A549 (cell line): ENCODE measurements at regions of chr19 and their contacts with region 1.

Region 1: DNA sequence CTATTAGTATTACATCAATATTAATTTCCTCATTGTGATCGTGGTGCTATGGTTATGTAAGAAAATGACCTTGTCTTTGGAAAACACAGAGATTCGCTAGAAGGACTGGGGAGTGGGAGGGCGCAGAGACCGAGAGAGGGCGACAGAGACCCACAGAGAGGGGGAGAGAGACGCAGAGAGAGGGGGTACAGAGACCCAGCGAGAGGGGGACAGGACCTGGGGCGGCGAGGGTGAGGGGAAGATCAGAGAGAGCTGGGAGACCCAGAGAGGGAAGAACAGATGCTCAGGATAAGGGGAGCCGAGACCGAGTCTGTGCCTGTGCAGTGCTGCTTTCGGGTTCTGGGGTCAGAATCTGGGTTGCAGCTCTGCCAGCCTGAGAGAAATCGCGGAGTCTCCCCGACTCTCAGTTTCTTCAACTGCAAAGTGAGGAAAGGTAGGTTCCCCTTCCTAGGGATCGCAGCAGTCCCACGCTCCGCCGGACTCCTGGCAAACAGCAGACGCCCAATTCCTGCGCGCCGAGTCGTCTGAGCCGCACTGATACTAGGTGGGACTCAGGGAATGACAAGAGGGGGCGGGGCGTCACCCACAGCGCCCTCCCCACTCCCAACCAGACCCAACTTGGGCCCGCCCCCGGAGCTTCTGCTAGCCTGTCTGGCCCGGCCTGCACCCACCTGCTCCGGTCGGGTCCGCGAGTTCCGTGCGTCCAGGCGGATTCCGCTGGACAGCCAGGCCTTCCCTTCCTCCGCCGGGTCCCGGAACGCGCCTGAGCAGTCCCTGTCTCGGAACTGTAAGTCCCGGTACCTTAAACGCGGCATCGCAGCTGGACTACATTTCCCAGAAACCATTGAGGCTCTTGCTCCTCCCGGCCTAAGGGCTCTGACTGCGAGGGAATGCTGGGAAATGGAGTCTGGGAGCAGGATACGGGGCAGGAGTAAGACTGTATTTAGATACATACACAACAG is 15.3 kb downstream of the IZUMO2 start:
- DNase-seq: peak; percentile 90 to 96
- ATAC-seq: peak; percentile 92 to 95
- H3K4me3 ChIP-seq: peak overlapping the region; percentile 53
- H3K27ac ChIP-seq: peak overlapping the region in 1 of 2 experiments; percentile 70; a peak in 3 of 6 replicates
- H3K4me1 ChIP-seq: peaks cover 3% of the 10 kb centered on the region; the same call in 1 of the 3 replicates
- CTCF ChIP-seq: peak; percentile 89
- EP300 ChIP-seq: no peak
- POLR2A ChIP-seq: no peak
- RAD21 ChIP-seq: peak; percentile 88 to 93

Region 2: DNA sequence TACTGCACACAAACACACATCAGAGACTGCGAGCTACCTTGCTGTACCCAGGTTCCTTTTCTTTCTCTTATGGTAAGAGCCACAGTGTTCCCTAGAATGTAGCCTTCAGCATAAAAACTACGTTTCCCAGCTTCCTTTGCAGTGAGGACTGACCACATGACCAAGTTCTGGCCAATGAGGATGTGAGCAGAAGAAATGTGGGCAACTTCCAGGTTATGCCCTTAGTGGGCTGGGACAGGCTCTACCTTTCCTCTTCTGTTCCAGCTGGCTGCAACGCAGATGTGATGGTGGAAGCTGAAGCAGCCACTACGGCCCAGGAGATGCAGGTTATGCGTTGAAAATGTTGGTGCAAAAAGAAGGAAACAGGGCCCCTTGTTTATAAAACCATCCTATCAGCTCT is 150.0 kb before region 1 on chr19:
- CTCF ChIA-PET with region 1: no interaction called
- POLR2A ChIA-PET with region 1: no interaction called
- DNase-seq: peak; percentile 76 to 83
- ATAC-seq: peak; percentile 72 to 95
- H3K4me3 ChIP-seq: no peak overlapping the region
- H3K27ac ChIP-seq: no peak overlapping the region
- H3K4me1 ChIP-seq: no peaks in the 10 kb centered on the region
- CTCF ChIP-seq: no peak
- EP300 ChIP-seq: no peak
- POLR2A ChIP-seq: no peak
- RAD21 ChIP-seq: no peak

Region 3: DNA sequence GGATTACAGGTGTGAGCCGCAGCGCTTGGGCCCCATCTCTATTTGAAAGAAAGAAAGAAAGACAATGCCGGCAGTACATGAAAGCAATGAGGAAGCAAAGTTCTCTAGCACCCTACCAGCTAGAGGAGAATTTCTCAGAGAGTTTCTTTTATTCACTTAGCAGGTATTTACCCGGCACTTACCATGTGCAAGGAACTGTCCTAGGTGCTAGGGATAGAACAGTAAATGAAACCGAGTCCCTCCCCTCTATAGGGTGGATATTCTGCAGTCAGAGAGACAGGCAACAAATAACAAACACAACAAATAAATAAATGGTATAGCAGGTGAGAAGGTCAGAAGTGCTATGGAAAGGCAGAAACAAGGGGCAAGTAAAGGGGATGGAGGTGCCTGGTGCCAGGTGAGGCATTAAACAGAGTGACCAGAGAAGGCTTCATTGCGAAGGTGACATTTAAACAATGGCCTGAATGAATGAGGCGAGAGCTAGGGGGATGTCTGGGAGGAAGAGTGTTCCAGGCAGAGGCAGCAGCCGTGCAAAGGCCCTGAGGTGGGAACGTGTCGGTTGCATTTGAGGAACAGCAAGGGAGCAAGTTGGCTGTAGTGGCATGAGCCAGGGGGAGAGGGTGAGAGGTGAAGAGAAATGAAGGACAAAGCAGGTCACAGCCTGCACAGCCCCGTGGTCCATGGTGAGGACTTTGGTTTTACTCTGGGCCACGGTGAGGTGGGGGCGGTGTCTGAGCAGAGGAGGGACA is 44.9 kb after region 1 on chr19:
- CTCF ChIA-PET with region 1: interaction called, 10 read pairs
- POLR2A ChIA-PET with region 1: no interaction called
- DNase-seq: no peak
- ATAC-seq: peak; percentile 16 to 22; a peak in 2 of 6 replicates
- H3K4me3 ChIP-seq: no peak overlapping the region
- H3K27ac ChIP-seq: no peak overlapping the region
- H3K4me1 ChIP-seq: no peaks in the 10 kb centered on the region
- CTCF ChIP-seq: no peak
- EP300 ChIP-seq: no peak
- POLR2A ChIP-seq: no peak
- RAD21 ChIP-seq: no peak

Region 4: GRCh38 chr19:50258918-50259372 is 111.2 kb after region 1 on chr19:
- CTCF ChIA-PET with region 1: interaction called, 30 read pairs
- POLR2A ChIA-PET with region 1: no interaction called
- DNase-seq: peak; percentile 39 to 42
- ATAC-seq: peak; percentile 41 to 71; a peak in 3 of 6 replicates
- H3K4me3 ChIP-seq: no peak overlapping the region
- H3K27ac ChIP-seq: no peak overlapping the region
- H3K4me1 ChIP-seq: no peaks in the 10 kb centered on the region
- CTCF ChIP-seq: peak; percentile 65
- EP300 ChIP-seq: no peak
- POLR2A ChIP-seq: no peak
- RAD21 ChIP-seq: peak; percentile 61 to 63

Region 5: GRCh38 chr19:50300814-50301606 is 153.3 kb after region 1 on chr19:
- CTCF ChIA-PET with region 1: interaction called, 18 read pairs
- POLR2A ChIA-PET with region 1: no interaction called
- DNase-seq: peak; percentile 81
- ATAC-seq: peak; percentile 98 to 99
- H3K4me3 ChIP-seq: no peak overlapping the region
- H3K27ac ChIP-seq: peak overlapping the region; percentile 38 to 54; a peak in 4 of 6 replicates
- H3K4me1 ChIP-seq: peaks cover 19% of the 10 kb centered on the region
- CTCF ChIP-seq: no peak
- EP300 ChIP-seq: no peak
- POLR2A ChIP-seq: no peak
- RAD21 ChIP-seq: no peak

Region 6: GRCh38 chr19:50349277-50350057 is 201.7 kb after region 1 on chr19:
- CTCF ChIA-PET with region 1: interaction called, 14 read pairs
- POLR2A ChIA-PET with region 1: no interaction called
- DNase-seq: no peak
- ATAC-seq: no peak
- H3K4me3 ChIP-seq: no peak overlapping the region
- H3K27ac ChIP-seq: no peak overlapping the region
- H3K4me1 ChIP-seq: no peaks in the 10 kb centered on the region
- CTCF ChIP-seq: no peak
- EP300 ChIP-seq: no peak
- POLR2A ChIP-seq: no peak
- RAD21 ChIP-seq: no peak

Region 7: DNA sequence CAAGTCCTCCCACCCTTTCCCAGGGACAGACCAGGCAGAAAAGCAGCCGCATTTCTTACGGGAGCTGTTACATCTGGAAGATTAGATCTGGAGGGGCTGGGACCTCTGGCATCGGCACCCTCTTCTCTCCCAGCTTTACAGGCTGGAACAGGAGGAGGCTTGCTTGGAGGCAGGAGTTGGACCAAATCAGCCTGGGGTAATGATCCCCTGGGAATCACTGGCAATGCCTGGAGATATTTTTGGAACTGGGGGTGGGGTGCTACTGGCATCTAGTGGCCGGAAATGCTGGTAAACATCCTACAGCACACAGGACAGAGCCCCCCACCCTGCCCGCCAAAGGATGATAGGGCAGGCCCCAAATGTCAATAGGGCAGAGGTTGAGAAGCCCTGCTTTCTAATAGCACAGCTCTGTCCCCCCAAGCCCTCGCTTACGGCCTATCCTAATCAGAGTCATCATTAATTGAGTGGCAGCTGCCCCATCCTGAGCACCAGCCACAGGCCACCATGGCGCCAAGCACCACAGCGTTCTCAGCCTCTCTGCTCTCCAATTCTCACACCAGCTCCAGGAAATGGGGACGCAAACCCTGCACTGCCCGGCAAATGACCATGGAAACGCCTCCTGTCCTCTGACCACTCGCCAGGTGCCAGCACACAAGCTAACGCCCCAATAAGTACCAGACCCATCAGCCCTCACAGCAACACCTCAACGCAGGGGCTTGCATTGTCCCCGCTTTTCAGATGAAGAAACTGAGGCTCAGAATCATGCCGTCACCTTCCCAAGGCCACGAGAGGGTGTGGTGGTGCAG is 399.8 kb after region 1 on chr19:
- CTCF ChIA-PET with region 1: no interaction called
- POLR2A ChIA-PET with region 1: no interaction called
- DNase-seq: no peak
- ATAC-seq: peak; percentile 4 to 13; a peak in 4 of 6 replicates
- H3K4me3 ChIP-seq: no peak overlapping the region
- H3K27ac ChIP-seq: no peak overlapping the region
- H3K4me1 ChIP-seq: peaks cover 3% of the 10 kb centered on the region; the same call in 1 of the 3 replicates
- CTCF ChIP-seq: no peak
- EP300 ChIP-seq: no peak
- POLR2A ChIP-seq: no peak
- RAD21 ChIP-seq: peak; percentile 14 to 22; a peak in 1 of 5 replicates